Activated CD4-positive, alpha-beta T cell treated with anti-CD3 and anti-CD28 coated beads for 36 hours (primary cell): ENCODE measurements at regions of chr12 and their contacts with region 1.

Region 1: DNA sequence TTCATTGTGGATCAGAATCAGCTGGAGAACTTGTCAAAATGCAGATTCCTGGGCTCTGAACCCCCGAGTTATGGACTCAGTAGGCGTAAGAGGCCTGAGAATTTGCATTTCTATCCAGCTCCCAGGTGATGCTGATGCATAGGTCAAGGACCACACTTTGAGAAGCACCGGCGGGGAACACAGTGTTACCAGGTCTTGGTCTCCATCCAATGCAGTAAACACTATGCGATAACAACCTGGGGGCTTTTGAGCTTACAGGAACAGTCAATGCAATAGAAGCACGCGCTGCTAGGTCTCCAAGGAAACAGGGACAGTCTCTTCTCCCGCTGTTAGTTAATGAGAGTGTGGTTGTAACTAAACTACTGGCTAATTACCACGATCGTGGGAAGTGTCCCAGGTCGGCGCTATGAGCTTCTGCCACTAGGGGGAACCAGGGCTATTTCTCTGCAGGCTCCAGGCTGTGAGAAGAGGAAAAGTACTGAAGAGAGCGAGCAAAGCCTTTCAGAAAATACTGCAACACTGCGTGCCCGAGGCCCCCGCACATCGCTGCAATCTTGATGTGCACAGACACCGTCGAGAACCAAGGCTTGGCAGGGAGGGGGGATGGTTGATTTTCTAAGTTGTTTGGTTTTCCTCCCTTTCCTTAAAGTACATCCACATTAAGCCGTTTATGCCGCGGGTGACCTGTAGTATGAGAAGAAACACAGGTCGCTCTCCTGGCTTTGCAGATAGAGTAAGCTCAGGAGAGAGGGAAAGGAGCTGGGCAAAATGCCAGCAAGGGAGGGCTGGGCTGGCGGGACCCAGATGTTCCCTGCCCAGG is 52.0 kb upstream of the KCNA1 start:
- DNase-seq: peak; percentile 87
- ATAC-seq: peak; percentile 88
- H3K4me3 Mint-ChIP-seq: no peak overlapping the region
- H3K27ac Mint-ChIP-seq: no peak overlapping the region
- H3K4me1 Mint-ChIP-seq: peaks cover 8% of the 10 kb centered on the region
- H3K27me3 Mint-ChIP-seq: peaks cover 16% of the 10 kb centered on the region

Region 2: GRCh38 chr12:4909734-4910501 is 52.2 kb after region 1 on chr12 and contains the start of gene KCNA1:
- CTCF ChIA-PET with region 1: interaction called, 6 read pairs
- POLR2A ChIA-PET with region 1: no interaction called
- intact Hi-C with region 1: loop called in 1 of 2 experiments (anchors 5 kb)
- DNase-seq: peak; percentile 45
- ATAC-seq: peak; percentile 26
- H3K4me3 Mint-ChIP-seq: peak within 1 kb of the TSS; percentile 76
- H3K27ac Mint-ChIP-seq: no peak within 1 kb of the TSS
- H3K4me1 Mint-ChIP-seq: peaks cover 16% of the 10 kb centered on the region
- H3K27me3 Mint-ChIP-seq: peaks cover 42% of the 10 kb centered on the region
- total RNA-seq, gene KCNA1: not detected

Region 3: GRCh38 chr12:5003020-5003666 is 145.5 kb after region 1 on chr12:
- CTCF ChIA-PET with region 1: interaction called, 8 read pairs
- POLR2A ChIA-PET with region 1: no interaction called
- intact Hi-C with region 1: loop called (anchors 1 kb)
- DNase-seq: peak; percentile 75
- ATAC-seq: peak; percentile 74
- H3K4me3 Mint-ChIP-seq: no peak overlapping the region
- H3K27ac Mint-ChIP-seq: no peak overlapping the region
- H3K4me1 Mint-ChIP-seq: no peaks in the 10 kb centered on the region
- H3K27me3 Mint-ChIP-seq: peaks cover 19% of the 10 kb centered on the region

Region 4: GRCh38 chr12:5022465-5023061 is 164.9 kb after region 1 on chr12:
- CTCF ChIA-PET with region 1: interaction called, 3 read pairs
- POLR2A ChIA-PET with region 1: no interaction called
- intact Hi-C with region 1: loop called in 1 of 2 experiments (anchors 1 kb)
- DNase-seq: peak; percentile 67
- ATAC-seq: peak; percentile 63
- H3K4me3 Mint-ChIP-seq: no peak overlapping the region
- H3K27ac Mint-ChIP-seq: no peak overlapping the region
- H3K4me1 Mint-ChIP-seq: no peaks in the 10 kb centered on the region
- H3K27me3 Mint-ChIP-seq: peaks cover 16% of the 10 kb centered on the region

Region 5: GRCh38 chr12:5073853-5074252 is 216.2 kb after region 1 on chr12:
- CTCF ChIA-PET with region 1: no interaction called
- POLR2A ChIA-PET with region 1: no interaction called
- intact Hi-C with region 1: no loop called
- DNase-seq: peak; percentile 20
- ATAC-seq: no peak
- H3K4me3 Mint-ChIP-seq: no peak overlapping the region
- H3K27ac Mint-ChIP-seq: no peak overlapping the region
- H3K4me1 Mint-ChIP-seq: no peaks in the 10 kb centered on the region
- H3K27me3 Mint-ChIP-seq: peaks cover 8% of the 10 kb centered on the region

Region 6: GRCh38 chr12:5083955-5084849 is 226.5 kb after region 1 on chr12:
- CTCF ChIA-PET with region 1: interaction called, 9 read pairs
- POLR2A ChIA-PET with region 1: no interaction called
- intact Hi-C with region 1: loop called (anchors 1 to 2 kb)
- DNase-seq: peak; percentile 29
- ATAC-seq: no peak
- H3K4me3 Mint-ChIP-seq: no peak overlapping the region
- H3K27ac Mint-ChIP-seq: no peak overlapping the region
- H3K4me1 Mint-ChIP-seq: no peaks in the 10 kb centered on the region
- H3K27me3 Mint-ChIP-seq: peaks cover 2% of the 10 kb centered on the region